Psoas muscle (tissue), 8 donors: ENCODE measurements at regions of chr14 and their contacts with region 1.

Region 1: GRCh38 chr14:38255673-38256532 is at the start of gene CLEC14A:
- DNase-seq: peak; percentile 77 to 89
- ATAC-seq: peak; percentile 66 to 82 (median 78)
- H3K4me3 ChIP-seq: peak within 1 kb of the TSS; percentile 69
- H3K27ac ChIP-seq: peak within 1 kb of the TSS; percentile 71
- H3K4me1 ChIP-seq: no peaks in the 10 kb centered on the region
- H3K27me3 ChIP-seq: peaks cover 0 to 20% (median 9%) of the 10 kb centered on the region in 3 donors
- CTCF ChIP-seq: no peak
- total RNA-seq, gene CLEC14A: 17.9 to 29.5 (median 19.9) TPM

Region 2: GRCh38 chr14:38309522-38310277 is 53.8 kb after region 1 on chr14:
- intact Hi-C with region 1: loop called in 1 of 2 experiments (anchors 2 kb)
- DNase-seq: no peak
- ATAC-seq: no peak
- H3K4me3 ChIP-seq: no peak overlapping the region
- H3K27ac ChIP-seq: peak overlapping the region; percentile 25
- H3K4me1 ChIP-seq: no peaks in the 10 kb centered on the region
- H3K27me3 ChIP-seq: no peaks in the 10 kb centered on the region
- CTCF ChIP-seq: no peak